ENCODE measurements at regions of chr6 and their contacts with region 1.

Region 1: GRCh38 chr6:108260809-108261569 is at the start of gene SNX3:
- H3K4me3 ChIP-seq: peak within 1 kb of the TSS; percentile 91
- H3K27ac ChIP-seq: peak within 1 kb of the TSS; percentile 71
- H3K4me1 ChIP-seq: 0 out of 2 replicates have a peak, but pooled peaks cover 3% of the 10 kb centered on the region
- CTCF ChIP-seq: peak; percentile 60

Region 2: GRCh38 chr6:108294727-108295625 is 34.0 kb after region 1 on chr6 and contains the start of gene AFG1L:
- CTCF ChIA-PET with region 1: interaction called, 3 read pairs
- POLR2A ChIA-PET with region 1: interaction called, 19 read pairs
- H3K4me3 ChIP-seq: peak within 1 kb of the TSS; percentile 85
- H3K27ac ChIP-seq: peak within 1 kb of the TSS; percentile 77
- H3K4me1 ChIP-seq: 0 out of 2 replicates have a peak, but pooled peaks cover 6% of the 10 kb centered on the region
- CTCF ChIP-seq: no peak; the same call in 1 of the 2 replicates

Region 3: GRCh38 chr6:108331982-108332381 is 71.0 kb after region 1 on chr6:
- CTCF ChIA-PET with region 1: no interaction called
- POLR2A ChIA-PET with region 1: no interaction called
- H3K4me3 ChIP-seq: no peak overlapping the region
- H3K27ac ChIP-seq: no peak overlapping the region
- H3K4me1 ChIP-seq: no peaks in the 10 kb centered on the region
- CTCF ChIP-seq: no peak